Dorsolateral prefrontal cortex (tissue), 120 donors: ENCODE measurements at regions of chr5 and their contacts with region 1.

Region 1: GRCh38 chr5:77844623-77845323 is 68.6 kb upstream of the TBCA start:
- DNase-seq: peak in 3 of 10 donors; percentile 26 to 52 (median 34)
- H3K4me3 ChIP-seq: peak overlapping the region; percentile 42 to 77 (median 60)
- H3K27ac ChIP-seq: peak overlapping the region in 56 of 59 donors; percentile 2 to 88 (median 69)
- H3K27me3 ChIP-seq: peaks cover 0 to 15% (median 0%) of the 10 kb centered on the region in 45 donors
- CTCF ChIP-seq: peak in 26 of 56 donors; percentile 8 to 50 (median 24)

Region 2: GRCh38 chr5:77645158-77645994 is 199.4 kb before region 1 on chr5:
- intact Hi-C with region 1: loop called (anchors 5 kb)
- DNase-seq: peak in 1 of 10 donors; percentile 63
- H3K4me3 ChIP-seq: peak overlapping the region in 51 of 59 donors; percentile 10 to 66 (median 45)
- H3K27ac ChIP-seq: no peak overlapping the region
- H3K27me3 ChIP-seq: peaks cover 26 to 65% (median 52%) of the 10 kb centered on the region in 45 donors
- CTCF ChIP-seq: peak in 48 of 56 donors; percentile 13 to 77 (median 44)